Dendritic cell treated with granulocyte-macrophage colony-stimulating factor and Interleukin-4, amounts not matched to agents 40 ng/mL and 50 ng/mL, for 4 days (primary cell): ENCODE measurements at regions of chr6 and their contacts with region 1.

Region 1: GRCh38 chr6:117346142-117346930 is 79.4 kb downstream of the ROS1 start:
- H3K4me3 Mint-ChIP-seq: no peak overlapping the region
- H3K27ac Mint-ChIP-seq: no peak overlapping the region
- H3K4me1 Mint-ChIP-seq: no peaks in the 10 kb centered on the region
- H3K27me3 Mint-ChIP-seq: no peaks in the 10 kb centered on the region

Region 2: DNA sequence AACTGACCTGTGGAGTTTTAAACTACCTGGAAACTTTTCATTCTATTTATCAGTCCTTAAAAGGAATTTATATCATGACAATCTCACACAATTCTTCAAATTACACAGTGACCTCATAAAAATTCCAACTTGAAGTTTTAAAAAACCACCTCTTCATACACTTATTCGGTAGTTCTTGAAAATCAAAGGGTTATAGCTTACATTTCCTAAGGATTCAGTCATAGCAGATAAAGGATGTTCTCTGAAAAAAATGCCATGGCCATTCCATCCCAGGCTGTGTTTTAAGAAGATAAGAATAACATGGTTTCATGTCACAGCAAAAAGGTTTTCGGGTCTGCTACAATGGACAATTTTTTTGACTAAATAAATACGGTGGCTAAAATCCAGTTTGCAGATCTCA is 214.8 kb after region 1 on chr6:
- intact Hi-C with region 1: loop called (anchors 5 kb)
- H3K4me3 Mint-ChIP-seq: no peak overlapping the region
- H3K27ac Mint-ChIP-seq: no peak overlapping the region
- H3K4me1 Mint-ChIP-seq: no peaks in the 10 kb centered on the region
- H3K27me3 Mint-ChIP-seq: peaks cover 2% of the 10 kb centered on the region

Region 3: GRCh38 chr6:117829594-117830319 is 483.4 kb after region 1 on chr6:
- intact Hi-C with region 1: loop called (anchors 10 kb)
- H3K4me3 Mint-ChIP-seq: no peak overlapping the region
- H3K27ac Mint-ChIP-seq: no peak overlapping the region
- H3K4me1 Mint-ChIP-seq: no peaks in the 10 kb centered on the region
- H3K27me3 Mint-ChIP-seq: peaks cover 3% of the 10 kb centered on the region